PC-9 (cell line): ENCODE measurements at regions of chr12 and their contacts with region 1.

Region 1: DNA sequence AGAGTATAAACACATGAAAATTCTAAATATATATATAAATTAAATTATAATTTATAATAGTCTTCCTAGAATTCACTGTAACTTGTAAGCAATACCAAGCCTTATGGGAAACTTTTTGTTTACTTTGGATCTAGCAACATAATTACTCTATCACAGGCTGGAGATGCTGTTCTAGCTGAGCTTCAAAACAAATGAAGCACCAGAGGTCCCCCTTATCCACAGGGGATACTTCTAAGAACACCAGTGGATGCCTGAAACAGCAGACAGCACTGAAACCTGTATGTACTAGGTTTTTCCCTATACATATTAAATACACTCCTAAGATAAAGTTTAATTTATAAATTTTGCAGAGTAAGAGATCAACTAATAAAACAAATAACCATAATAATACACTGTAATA is 96.6 kb downstream of the CDK17 start:
- DNase-seq: no peak
- H3K4me3 ChIP-seq: no peak overlapping the region
- H3K27ac ChIP-seq: no peak overlapping the region
- H3K4me1 ChIP-seq: no peaks in the 10 kb centered on the region
- H3K27me3 ChIP-seq: no peaks in the 10 kb centered on the region
- CTCF ChIP-seq: no peak

Region 2: GRCh38 chr12:95516757-95517156 is 786.9 kb before region 1 on chr12:
- CTCF ChIA-PET with region 1: interaction called, 14 read pairs
- POLR2A ChIA-PET with region 1: no interaction called
- intact Hi-C with region 1: no loop called
- DNase-seq: no peak
- H3K4me3 ChIP-seq: no peak overlapping the region
- H3K27ac ChIP-seq: no peak overlapping the region; the same call in 1 of the 2 replicates
- H3K4me1 ChIP-seq: no peaks in the 10 kb centered on the region
- H3K27me3 ChIP-seq: no peaks in the 10 kb centered on the region
- CTCF ChIP-seq: no peak

Region 3: DNA sequence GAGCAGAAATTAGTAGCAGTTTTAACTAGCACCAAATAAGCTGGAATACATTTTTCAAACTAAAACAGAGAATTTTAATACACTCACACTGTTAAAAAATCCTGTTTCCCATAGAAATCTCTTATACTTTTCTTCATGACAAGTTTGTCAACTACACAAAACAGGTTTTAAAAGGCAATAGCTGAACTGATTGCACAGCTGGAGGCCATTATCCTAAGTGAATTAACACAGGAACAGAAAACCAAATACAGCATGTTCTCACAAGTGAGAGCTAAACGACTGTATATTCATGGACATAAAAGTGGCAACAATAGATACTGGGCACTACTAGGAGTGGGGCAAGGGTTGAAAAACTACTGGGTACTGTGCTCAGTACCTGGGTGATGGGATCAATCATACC is 295.9 kb before region 1 on chr12:
- CTCF ChIA-PET with region 1: no interaction called
- POLR2A ChIA-PET with region 1: no interaction called
- intact Hi-C with region 1: no loop called
- DNase-seq: no peak
- H3K4me3 ChIP-seq: no peak overlapping the region
- H3K27ac ChIP-seq: no peak overlapping the region
- H3K4me1 ChIP-seq: no peaks in the 10 kb centered on the region
- H3K27me3 ChIP-seq: no peaks in the 10 kb centered on the region
- CTCF ChIP-seq: no peak

Region 4: GRCh38 chr12:96471368-96472050 is 167.9 kb after region 1 on chr12:
- CTCF ChIA-PET with region 1: no interaction called
- POLR2A ChIA-PET with region 1: no interaction called
- intact Hi-C with region 1: no loop called
- DNase-seq: peak in 1 of 2 experiments; percentile 48
- H3K4me3 ChIP-seq: no peak overlapping the region
- H3K27ac ChIP-seq: 0 out of 2 replicates have a peak overlapping the region, but pooled peaks have one; percentile 36
- H3K4me1 ChIP-seq: peaks cover 36% of the 10 kb centered on the region
- H3K27me3 ChIP-seq: no peaks in the 10 kb centered on the region
- CTCF ChIP-seq: no peak

Region 5: DNA sequence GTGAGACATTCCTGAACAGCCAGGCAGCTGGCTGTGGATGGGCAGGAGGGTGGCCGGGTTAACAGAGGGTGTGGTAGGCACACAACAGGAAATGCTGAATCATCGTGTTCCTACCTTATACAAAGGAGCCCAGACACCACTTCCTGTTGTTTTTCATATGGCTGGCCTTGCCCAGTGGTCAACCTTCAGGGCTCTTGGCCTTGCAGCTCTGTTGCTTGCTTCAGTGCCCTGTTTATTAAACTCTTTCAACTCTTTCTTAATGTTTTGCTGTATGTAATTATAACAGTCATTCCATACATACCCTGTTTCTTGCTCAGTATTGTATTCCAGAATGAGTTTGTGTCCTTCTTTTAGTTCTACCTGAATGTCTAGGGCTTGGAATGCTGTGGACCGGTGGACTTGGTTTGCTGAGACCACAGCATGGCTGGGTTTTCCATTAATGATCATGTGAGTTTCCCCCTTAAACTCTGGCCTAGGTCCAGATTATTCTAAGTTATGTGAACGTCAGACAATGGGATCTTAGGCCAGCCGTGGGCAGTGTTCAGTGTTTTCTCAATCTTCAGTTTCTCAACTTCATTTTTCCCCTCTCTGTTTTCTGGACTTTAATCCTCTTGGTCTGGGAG is 197.6 kb after region 1 on chr12:
- CTCF ChIA-PET with region 1: interaction called, 10 read pairs
- POLR2A ChIA-PET with region 1: no interaction called
- intact Hi-C with region 1: no loop called
- DNase-seq: peak; percentile 72 to 85
- H3K4me3 ChIP-seq: peak overlapping the region; percentile 34; the same call in 1 of the 2 replicates
- H3K27ac ChIP-seq: peak overlapping the region; percentile 98
- H3K4me1 ChIP-seq: peaks cover 32% of the 10 kb centered on the region
- H3K27me3 ChIP-seq: no peaks in the 10 kb centered on the region
- CTCF ChIP-seq: no peak

Region 6: GRCh38 chr12:97038834-97039233 is 735.2 kb after region 1 on chr12:
- CTCF ChIA-PET with region 1: no interaction called
- POLR2A ChIA-PET with region 1: no interaction called
- intact Hi-C with region 1: no loop called
- DNase-seq: no peak
- H3K4me3 ChIP-seq: no peak overlapping the region
- H3K27ac ChIP-seq: no peak overlapping the region
- H3K4me1 ChIP-seq: no peaks in the 10 kb centered on the region
- H3K27me3 ChIP-seq: peaks cover 19% of the 10 kb centered on the region
- CTCF ChIP-seq: no peak